ENCODE measurements at regions of chr17 and their contacts with region 1.

Region 1: GRCh38 chr17:58447039-58447975 is 30.0 kb upstream of the RNF43 start:
- DNase-seq: peak; percentile 85
- ATAC-seq: peak; percentile 100
- H3K4me3 ChIP-seq: no peak overlapping the region
- H3K27ac ChIP-seq: no peak overlapping the region
- H3K4me1 ChIP-seq: no peaks in the 10 kb centered on the region
- H3K27me3 ChIP-seq: peaks cover 2% of the 10 kb centered on the region
- CTCF ChIP-seq: peak; percentile 94
- POLR2A ChIP-seq: 0 out of 2 replicates have a peak, but pooled peaks have one; percentile 29
- RAD21 ChIP-seq: peak; percentile 98

Region 2: GRCh38 chr17:58121925-58122324 is 325.4 kb before region 1 on chr17:
- CTCF ChIA-PET with region 1: no interaction called
- POLR2A ChIA-PET with region 1: no interaction called
- dilution Hi-C with region 1: no loop called
- in situ Hi-C with region 1: no loop called
- intact Hi-C with region 1: loop called (anchors 5 kb)
- DNase-seq: peak; percentile 22
- ATAC-seq: no peak
- H3K4me3 ChIP-seq: no peak overlapping the region
- H3K27ac ChIP-seq: no peak overlapping the region
- H3K4me1 ChIP-seq: no peaks in the 10 kb centered on the region
- H3K27me3 ChIP-seq: no peaks in the 10 kb centered on the region
- CTCF ChIP-seq: no peak
- POLR2A ChIP-seq: no peak
- RAD21 ChIP-seq: no peak

Region 3: DNA sequence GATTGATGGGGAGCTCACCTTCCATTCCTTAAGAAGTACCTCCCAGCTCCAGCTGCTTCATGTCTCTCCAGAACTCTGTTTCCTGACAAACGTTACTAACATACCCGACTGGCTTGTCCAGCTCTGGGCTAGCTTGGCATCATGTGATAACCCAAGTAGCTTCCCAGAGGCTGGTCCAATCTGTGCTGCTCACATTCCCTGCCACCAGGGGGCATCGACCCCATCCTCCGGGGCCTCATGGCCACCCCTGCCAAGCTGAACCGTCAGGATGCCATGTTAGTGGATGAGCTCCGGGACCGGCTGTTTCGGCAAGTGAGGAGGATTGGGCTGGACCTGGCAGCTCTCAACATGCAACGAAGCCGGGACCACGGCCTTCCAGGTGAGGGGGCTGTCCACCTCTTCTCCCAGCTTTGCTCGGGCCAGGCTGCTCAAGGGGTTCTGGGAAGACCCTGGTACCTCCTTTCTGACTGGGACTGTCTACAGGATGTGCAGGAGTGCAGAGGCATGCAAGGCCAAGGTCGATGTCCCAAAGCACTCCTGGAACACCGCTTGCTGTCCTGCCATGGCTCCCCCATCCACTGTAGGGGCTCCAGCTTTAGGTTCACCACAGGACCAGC is 247.2 kb before region 1 on chr17:
- CTCF ChIA-PET with region 1: no interaction called
- POLR2A ChIA-PET with region 1: no interaction called
- dilution Hi-C with region 1: no loop called
- in situ Hi-C with region 1: no loop called
- intact Hi-C with region 1: loop called (anchors 2 kb)
- DNase-seq: peak; percentile 36
- ATAC-seq: peak; percentile 56; the same call in 1 of the 2 replicates
- H3K4me3 ChIP-seq: no peak overlapping the region
- H3K27ac ChIP-seq: no peak overlapping the region
- H3K4me1 ChIP-seq: no peaks in the 10 kb centered on the region
- H3K27me3 ChIP-seq: peaks cover 12% of the 10 kb centered on the region
- CTCF ChIP-seq: peak; percentile 47
- POLR2A ChIP-seq: no peak
- RAD21 ChIP-seq: peak; percentile 37; the same call in 1 of the 2 replicates

Region 4: DNA sequence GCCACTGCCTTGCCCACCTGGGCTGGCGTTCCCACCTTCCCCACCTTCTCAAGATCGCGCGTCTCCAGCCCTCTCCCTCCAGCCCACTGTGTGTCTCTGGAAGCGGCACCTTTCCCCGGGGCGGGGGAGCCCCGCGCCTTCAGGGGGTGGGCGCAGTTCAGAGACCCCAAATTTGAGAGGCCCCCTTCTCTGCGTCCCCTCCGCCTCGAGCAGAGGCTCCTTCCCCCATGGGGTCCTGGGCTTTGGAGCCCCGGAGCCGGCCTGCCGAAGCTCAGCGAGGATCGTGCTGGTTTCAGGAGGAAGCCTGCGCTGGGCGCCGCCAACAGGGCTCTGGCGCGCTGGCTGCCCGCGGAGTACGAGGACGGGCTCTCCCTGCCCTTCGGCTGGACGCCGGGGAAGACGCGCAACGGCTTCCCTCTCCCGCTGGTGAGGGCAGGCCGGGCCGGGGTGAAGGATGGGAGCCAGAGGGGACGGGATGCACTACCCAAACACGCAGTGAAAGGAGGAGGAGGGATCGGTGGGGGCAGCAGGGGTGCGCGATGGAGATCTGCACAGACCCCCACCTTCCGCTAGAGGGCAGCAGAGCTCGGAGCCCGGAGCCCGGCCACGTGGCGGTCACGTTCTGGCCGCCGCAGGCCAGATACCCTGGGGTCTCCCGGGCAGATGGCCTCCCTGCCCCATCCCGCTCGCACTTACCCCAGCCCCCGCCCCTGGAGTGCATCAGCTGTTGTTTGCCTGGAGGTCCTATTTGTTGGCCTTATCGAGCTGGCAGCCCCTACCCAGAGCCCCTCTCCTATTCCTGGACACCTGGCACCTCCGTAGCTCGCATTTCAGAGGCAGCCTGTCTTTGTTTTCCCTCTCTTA is 197.8 kb before region 1 on chr17:
- CTCF ChIA-PET with region 1: no interaction called
- POLR2A ChIA-PET with region 1: no interaction called
- dilution Hi-C with region 1: no loop called
- in situ Hi-C with region 1: no loop called
- intact Hi-C with region 1: loop called (anchors 2 kb)
- DNase-seq: peak; percentile 31
- ATAC-seq: peak; percentile 96
- H3K4me3 ChIP-seq: peak overlapping the region; percentile 69
- H3K27ac ChIP-seq: no peak overlapping the region
- H3K4me1 ChIP-seq: no peaks in the 10 kb centered on the region
- H3K27me3 ChIP-seq: peaks cover 56% of the 10 kb centered on the region
- CTCF ChIP-seq: peak; percentile 70
- POLR2A ChIP-seq: no peak
- RAD21 ChIP-seq: peak; percentile 49

Region 5: GRCh38 chr17:58303971-58304725 is 143.2 kb before region 1 on chr17:
- CTCF ChIA-PET with region 1: no interaction called
- POLR2A ChIA-PET with region 1: no interaction called
- dilution Hi-C with region 1: no loop called
- in situ Hi-C with region 1: no loop called
- intact Hi-C with region 1: loop called (anchors 2 kb)
- DNase-seq: peak; percentile 23
- ATAC-seq: peak; percentile 83
- H3K4me3 ChIP-seq: no peak overlapping the region
- H3K27ac ChIP-seq: no peak overlapping the region
- H3K4me1 ChIP-seq: no peaks in the 10 kb centered on the region
- H3K27me3 ChIP-seq: peaks cover 7% of the 10 kb centered on the region; the same call in 1 of the 2 replicates
- CTCF ChIP-seq: peak; percentile 62
- POLR2A ChIP-seq: no peak
- RAD21 ChIP-seq: peak; percentile 52

Region 6: GRCh38 chr17:58317421-58318064 is 129.8 kb before region 1 on chr17:
- CTCF ChIA-PET with region 1: interaction called, 8 read pairs
- POLR2A ChIA-PET with region 1: no interaction called
- dilution Hi-C with region 1: no loop called
- in situ Hi-C with region 1: loop called (anchors 5 kb)
- intact Hi-C with region 1: loop called (anchors 1 kb)
- DNase-seq: peak; percentile 75
- ATAC-seq: peak; percentile 90
- H3K4me3 ChIP-seq: no peak overlapping the region
- H3K27ac ChIP-seq: no peak overlapping the region
- H3K4me1 ChIP-seq: no peaks in the 10 kb centered on the region
- H3K27me3 ChIP-seq: no peaks in the 10 kb centered on the region
- CTCF ChIP-seq: peak; percentile 88
- POLR2A ChIP-seq: peak; percentile 42; the same call in 1 of the 2 replicates
- RAD21 ChIP-seq: peak; percentile 96

Region 7: GRCh38 chr17:58352014-58352842 is 95.1 kb before region 1 on chr17 and contains the start of gene SUPT4H1:
- CTCF ChIA-PET with region 1: no interaction called
- POLR2A ChIA-PET with region 1: no interaction called
- dilution Hi-C with region 1: no loop called
- in situ Hi-C with region 1: no loop called
- intact Hi-C with region 1: loop called (anchors 1 kb)
- DNase-seq: peak; percentile 92
- ATAC-seq: peak; percentile 87
- H3K4me3 ChIP-seq: peak within 1 kb of the TSS; percentile 94
- H3K27ac ChIP-seq: peak within 1 kb of the TSS; percentile 94
- H3K4me1 ChIP-seq: no peaks in the 10 kb centered on the region
- H3K27me3 ChIP-seq: no peaks in the 10 kb centered on the region
- CTCF ChIP-seq: no peak
- POLR2A ChIP-seq: peak; percentile 89
- RAD21 ChIP-seq: 0 out of 2 replicates have a peak, but pooled peaks have one; percentile 6
- total RNA-seq, gene SUPT4H1: 51.6 and 83.6 TPM in 2 replicates

Region 8: GRCh38 chr17:58463821-58464220 is 16.5 kb after region 1 on chr17:
- CTCF ChIA-PET with region 1: no interaction called
- POLR2A ChIA-PET with region 1: no interaction called
- dilution Hi-C with region 1: no loop called
- in situ Hi-C with region 1: no loop called
- intact Hi-C with region 1: no loop called
- DNase-seq: no peak
- ATAC-seq: no peak
- H3K4me3 ChIP-seq: no peak overlapping the region
- H3K27ac ChIP-seq: no peak overlapping the region
- H3K4me1 ChIP-seq: no peaks in the 10 kb centered on the region
- H3K27me3 ChIP-seq: no peaks in the 10 kb centered on the region; the same call in 1 of the 2 replicates
- CTCF ChIP-seq: no peak
- POLR2A ChIP-seq: no peak
- RAD21 ChIP-seq: no peak

Measured in IMR-90 (cell line).